ENCODE measurements at regions of chr15 and their contacts with region 1.

Region 1: GRCh38 chr15:25790000-25790660 is 73.0 kb downstream of the ATP10A start:
- DNase-seq: peak in 4 of 5 donors; percentile 45 to 73 (median 62)
- ATAC-seq: peak; percentile 69 to 85 (median 78)
- H3K4me3 ChIP-seq: no peak overlapping the region
- H3K27ac ChIP-seq: peak overlapping the region; percentile 3 to 88 (median 68)
- H3K4me1 ChIP-seq: peaks cover 0 to 63% (median 14%) of the 10 kb centered on the region in 12 donors
- H3K27me3 ChIP-seq: no peaks in the 10 kb centered on the region
- CTCF ChIP-seq: no peak
- POLR2A ChIP-seq: no peak

Region 2: GRCh38 chr15:24734391-24734790 is 1055.7 kb before region 1 on chr15:
- intact Hi-C with region 1: no loop called
- DNase-seq: no peak
- ATAC-seq: no peak
- H3K4me3 ChIP-seq: no peak overlapping the region
- H3K27ac ChIP-seq: no peak overlapping the region
- H3K4me1 ChIP-seq: no peaks in the 10 kb centered on the region
- H3K27me3 ChIP-seq: no peaks in the 10 kb centered on the region
- CTCF ChIP-seq: no peak
- POLR2A ChIP-seq: no peak

Region 3: GRCh38 chr15:25829073-25829472 is 38.9 kb after region 1 on chr15:
- intact Hi-C with region 1: loop called in 1 of 10 experiments (anchors 5 kb)
- DNase-seq: no peak
- ATAC-seq: no peak
- H3K4me3 ChIP-seq: no peak overlapping the region
- H3K27ac ChIP-seq: peak overlapping the region in 1 of 12 donors; percentile 67
- H3K4me1 ChIP-seq: peaks cover 0 to 20% (median 1%) of the 10 kb centered on the region in 12 donors
- H3K27me3 ChIP-seq: no peaks in the 10 kb centered on the region
- CTCF ChIP-seq: no peak
- POLR2A ChIP-seq: no peak

Region 4: GRCh38 chr15:25947323-25948314 is 157.5 kb after region 1 on chr15:
- intact Hi-C with region 1: no loop called
- DNase-seq: no peak
- ATAC-seq: no peak
- H3K4me3 ChIP-seq: no peak overlapping the region
- H3K27ac ChIP-seq: no peak overlapping the region
- H3K4me1 ChIP-seq: no peaks in the 10 kb centered on the region
- H3K27me3 ChIP-seq: peaks cover 0 to 6% (median 0%) of the 10 kb centered on the region in 9 donors
- CTCF ChIP-seq: no peak
- POLR2A ChIP-seq: no peak